ENCODE measurements at regions of chr1 and their contacts with region 1.

Region 1: GRCh38 chr1:67674260-67675011 is 10.6 kb upstream of the GADD45A start:
- DNase-seq: no peak
- H3K4me3 ChIP-seq: no peak overlapping the region
- H3K27ac ChIP-seq: no peak overlapping the region
- H3K4me1 ChIP-seq: no peaks in the 10 kb centered on the region
- H3K27me3 ChIP-seq: no peaks in the 10 kb centered on the region
- CTCF ChIP-seq: no peak

Region 2: DNA sequence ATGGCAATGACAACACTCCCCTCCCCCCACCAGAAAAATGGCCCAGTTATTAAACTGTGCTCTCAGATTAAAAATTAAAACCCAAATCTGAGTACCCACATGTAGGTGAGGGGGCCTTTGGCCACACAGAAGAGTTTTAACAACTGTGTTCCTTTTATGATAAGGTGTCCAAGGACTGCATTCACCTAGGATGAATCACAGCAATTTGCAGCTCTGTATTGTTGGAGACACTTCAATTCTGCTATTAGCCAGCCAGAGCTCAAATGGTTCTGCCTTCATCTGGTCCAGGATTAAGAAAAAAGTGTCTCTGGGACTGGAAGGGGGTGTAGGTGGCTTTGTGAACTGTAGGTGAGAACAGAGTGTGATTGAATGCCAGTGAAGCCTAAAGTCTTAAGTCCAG is 419.3 kb after region 1 on chr1:
- intact Hi-C with region 1: loop called (anchors 5 kb)
- DNase-seq: no peak
- H3K4me3 ChIP-seq: no peak overlapping the region
- H3K27ac ChIP-seq: no peak overlapping the region
- H3K4me1 ChIP-seq: no peaks in the 10 kb centered on the region
- H3K27me3 ChIP-seq: no peaks in the 10 kb centered on the region
- CTCF ChIP-seq: no peak

Measured in tibial artery (tissue), 4 donors.